ENCODE measurements at regions of chr16 and their contacts with region 1.

Region 1: GRCh38 chr16:23959072-23959751 is 123.4 kb downstream of the PRKCB start:
- DNase-seq: no peak
- H3K4me3 Mint-ChIP-seq: peak overlapping the region; percentile 37
- H3K27ac Mint-ChIP-seq: peak overlapping the region; percentile 74
- H3K4me1 Mint-ChIP-seq: peaks cover 52% of the 10 kb centered on the region
- H3K27me3 Mint-ChIP-seq: no peaks in the 10 kb centered on the region

Region 2: GRCh38 chr16:23826528-23827045 is 132.6 kb before region 1 on chr16:
- intact Hi-C with region 1: loop called (anchors 5 kb)
- DNase-seq: no peak
- H3K4me3 Mint-ChIP-seq: peak overlapping the region; percentile 10
- H3K27ac Mint-ChIP-seq: peak overlapping the region; percentile 13
- H3K4me1 Mint-ChIP-seq: peaks cover 40% of the 10 kb centered on the region
- H3K27me3 Mint-ChIP-seq: no peaks in the 10 kb centered on the region

Region 3: GRCh38 chr16:23999663-24000062 is 40.5 kb after region 1 on chr16:
- intact Hi-C with region 1: loop called (anchors 1 kb)
- DNase-seq: no peak
- H3K4me3 Mint-ChIP-seq: no peak overlapping the region
- H3K27ac Mint-ChIP-seq: peak overlapping the region; percentile 69
- H3K4me1 Mint-ChIP-seq: peaks cover 17% of the 10 kb centered on the region
- H3K27me3 Mint-ChIP-seq: no peaks in the 10 kb centered on the region

Measured in activated T-helper 2 cell treated with anti-CD3 and anti-CD28 coated beads, Interferon-gamma antibody, Interleukin-2, Interleukin-4, amounts not matched to agents 10 μg/mL and 5 μg/mL and 100 μg/mL, durations not matched to agents 14 hours and 24 hours and 36 hours (primary cell).